ENCODE measurements at regions of chr12 and their contacts with region 1.

Region 1: GRCh38 chr12:44930972-44931600 is 55.0 kb upstream of the NELL2 start:
- DNase-seq: peak; percentile 5
- H3K4me3 ChIP-seq: no peak overlapping the region
- H3K27me3 ChIP-seq: no peaks in the 10 kb centered on the region
- CTCF ChIP-seq: peak; percentile 44

Region 2: GRCh38 chr12:44015335-44015941 is 915.6 kb before region 1 on chr12:
- CTCF ChIA-PET with region 1: interaction called, 12 read pairs
- POLR2A ChIA-PET with region 1: no interaction called
- DNase-seq: peak; percentile 10
- H3K4me3 ChIP-seq: no peak overlapping the region
- H3K27me3 ChIP-seq: no peaks in the 10 kb centered on the region
- CTCF ChIP-seq: peak; percentile 56

Region 3: DNA sequence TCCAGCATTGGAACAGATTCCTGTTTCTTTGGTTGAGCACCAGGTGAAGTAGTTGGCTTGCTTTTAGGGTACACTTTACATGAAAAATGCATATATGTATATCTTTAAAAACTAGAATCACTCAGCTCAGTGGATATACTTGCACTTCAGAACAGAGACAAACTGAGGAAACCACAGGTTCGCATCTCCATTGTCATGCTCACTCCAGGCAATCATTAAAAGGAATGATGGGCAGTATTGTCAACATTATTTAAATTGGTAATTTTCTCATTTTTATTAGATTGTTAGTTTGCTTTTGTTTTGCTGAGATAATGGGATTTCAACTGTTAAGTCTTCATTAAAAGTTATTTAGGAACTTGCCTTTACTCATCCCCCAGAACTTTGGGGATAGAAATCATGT is 16.1 kb after region 1 on chr12:
- CTCF ChIA-PET with region 1: interaction called, 10 read pairs
- POLR2A ChIA-PET with region 1: no interaction called
- DNase-seq: no peak
- H3K4me3 ChIP-seq: no peak overlapping the region
- H3K27me3 ChIP-seq: no peaks in the 10 kb centered on the region
- CTCF ChIP-seq: no peak

Measured in BJ (cell line).